Common myeloid progenitor, CD34-positive (primary cell): ENCODE measurements at regions of chr1 and their contacts with region 1.

Region 1: DNA sequence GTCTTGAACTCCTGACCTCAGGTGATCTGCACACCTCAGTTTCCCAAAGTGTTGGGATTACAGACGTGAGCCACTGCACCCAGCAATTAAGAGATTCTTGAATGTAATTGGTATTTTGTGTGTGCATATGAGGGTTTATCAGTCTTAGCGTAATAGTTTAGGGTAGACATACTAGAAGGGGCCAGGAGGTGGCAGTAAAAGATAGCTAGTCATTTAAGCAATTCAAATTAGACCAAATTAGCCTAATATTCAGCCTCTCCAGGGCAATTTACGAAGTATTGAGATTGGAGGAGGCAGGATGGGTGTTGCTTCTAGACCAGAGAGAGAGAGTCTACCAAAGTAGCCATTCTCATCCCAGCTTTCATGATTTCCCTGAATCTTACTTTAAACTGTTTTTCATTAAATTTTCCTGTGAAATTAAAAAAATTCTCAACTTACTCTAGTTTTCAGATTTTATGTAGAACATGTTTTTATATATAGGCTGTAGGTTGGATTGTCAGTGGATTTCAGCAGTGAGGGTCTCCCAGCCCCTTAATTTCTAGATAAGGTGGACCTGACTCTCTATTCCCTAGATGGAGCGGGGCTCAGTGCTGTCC is 119.7 kb downstream of the HHAT start:
- DNase-seq: peak; percentile 61 to 81 (median 70)
- H3K4me3 ChIP-seq: no peak overlapping the region
- H3K27ac ChIP-seq: no peak overlapping the region
- H3K4me1 ChIP-seq: no peaks in the 10 kb centered on the region
- H3K27me3 ChIP-seq: no peaks in the 10 kb centered on the region

Region 2: DNA sequence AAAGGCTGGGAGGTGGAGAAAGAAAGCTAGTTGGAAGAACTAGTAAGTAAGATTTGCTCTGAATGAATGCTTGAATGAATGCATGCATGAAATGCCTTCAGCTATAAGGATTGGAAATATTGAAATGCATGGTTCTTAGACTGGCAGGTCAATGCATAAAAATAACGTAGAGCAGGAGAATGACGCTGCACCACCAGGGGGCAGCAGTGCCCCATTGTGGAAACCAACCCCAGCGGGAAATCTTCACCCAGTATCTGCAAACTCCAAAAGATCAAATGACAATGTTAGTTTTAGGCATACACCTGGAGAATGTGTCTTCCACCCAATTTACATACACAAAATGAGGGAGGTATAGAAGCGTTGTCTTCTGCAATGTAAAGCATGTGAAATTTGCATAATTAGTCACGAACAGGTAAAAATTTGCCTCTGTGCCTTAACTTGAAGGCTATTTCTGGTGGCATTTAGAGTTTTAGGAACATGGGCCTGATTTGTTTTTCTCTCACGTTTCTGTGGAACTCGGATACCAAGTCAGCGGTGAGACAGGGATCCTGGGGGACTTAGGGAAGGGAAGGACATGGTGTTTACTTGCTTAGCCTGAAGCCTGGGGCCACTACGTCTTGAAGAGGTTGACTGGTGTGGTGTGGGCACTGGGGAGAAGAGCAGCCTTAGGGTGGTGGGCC is 41.0 kb before region 1 on chr1:
- CTCF ChIA-PET with region 1: interaction called, 11 read pairs
- POLR2A ChIA-PET with region 1: no interaction called
- DNase-seq: peak; percentile 54 to 78 (median 66)
- H3K4me3 ChIP-seq: no peak overlapping the region
- H3K27ac ChIP-seq: no peak overlapping the region
- H3K4me1 ChIP-seq: no peaks in the 10 kb centered on the region
- H3K27me3 ChIP-seq: no peaks in the 10 kb centered on the region

Region 3: GRCh38 chr1:210584439-210585113 is 136.2 kb after region 1 on chr1:
- CTCF ChIA-PET with region 1: interaction called, 55 read pairs
- POLR2A ChIA-PET with region 1: no interaction called
- DNase-seq: peak; percentile 87 to 95 (median 93)
- H3K4me3 ChIP-seq: no peak overlapping the region
- H3K27ac ChIP-seq: no peak overlapping the region
- H3K4me1 ChIP-seq: peaks cover 10 to 27% (median 19%) of the 10 kb centered on the region in 4 experiments
- H3K27me3 ChIP-seq: no peaks in the 10 kb centered on the region

Region 4: GRCh38 chr1:210949039-210949438 is 500.6 kb after region 1 on chr1:
- CTCF ChIA-PET with region 1: interaction called, 12 read pairs
- POLR2A ChIA-PET with region 1: no interaction called
- DNase-seq: no peak
- H3K4me3 ChIP-seq: no peak overlapping the region
- H3K27ac ChIP-seq: no peak overlapping the region
- H3K4me1 ChIP-seq: no peaks in the 10 kb centered on the region
- H3K27me3 ChIP-seq: no peaks in the 10 kb centered on the region